ENCODE measurements at regions of chr2 and their contacts with region 1.

Region 1: DNA sequence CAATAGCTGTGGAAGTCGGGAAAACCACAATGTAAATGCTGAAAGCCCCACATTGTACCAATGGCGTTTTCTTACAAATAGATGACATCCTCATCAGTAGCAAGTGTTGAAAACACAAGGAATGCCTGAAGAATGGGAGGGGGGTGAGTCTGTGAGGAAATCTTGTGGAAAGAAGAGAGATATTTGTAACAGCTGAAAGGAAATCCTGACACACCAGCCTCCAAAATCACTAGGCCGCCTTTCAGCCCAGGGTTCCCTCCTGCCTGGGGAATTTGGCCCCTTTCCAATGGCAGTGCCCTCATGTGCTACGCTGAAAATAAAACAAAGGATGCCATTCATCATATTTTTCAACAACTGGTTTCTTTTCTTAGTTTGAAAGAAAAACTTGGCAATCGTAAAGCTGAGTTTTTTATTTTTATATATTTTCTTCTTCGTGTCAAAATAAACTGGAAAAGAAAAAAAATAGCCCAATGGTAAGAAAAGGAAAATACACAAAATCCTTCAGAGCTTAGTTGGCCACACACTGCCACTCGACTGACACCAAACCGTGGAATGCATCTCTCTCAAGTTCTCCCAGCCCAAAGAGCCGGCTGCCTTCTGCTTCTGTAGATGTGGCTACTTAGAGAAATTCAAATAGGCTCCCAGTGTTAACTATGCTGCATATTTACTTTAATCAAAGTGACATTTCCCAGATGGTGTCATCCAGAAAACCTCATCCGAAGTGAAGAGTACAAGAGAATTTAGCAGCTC is 52.0 kb downstream of the FTCDNL1 start:
- DNase-seq: peak; percentile 73
- H3K4me3 ChIP-seq: no peak overlapping the region
- H3K27ac ChIP-seq: peak overlapping the region in 3 of 4 donors; percentile 6 to 44 (median 44)
- H3K4me1 ChIP-seq: peaks cover 0 to 27% (median 21%) of the 10 kb centered on the region in 4 donors
- H3K27me3 ChIP-seq: no peaks in the 10 kb centered on the region
- CTCF ChIP-seq: no peak
- EP300 ChIP-seq: no peak
- POLR2A ChIP-seq: no peak

Region 2: GRCh38 chr2:199739413-199740110 is 59.4 kb before region 1 on chr2:
- intact Hi-C with region 1: no loop called
- DNase-seq: peak; percentile 81
- H3K4me3 ChIP-seq: no peak overlapping the region
- H3K27ac ChIP-seq: no peak overlapping the region
- H3K4me1 ChIP-seq: peaks cover 0 to 13% (median 11%) of the 10 kb centered on the region in 4 donors
- H3K27me3 ChIP-seq: no peaks in the 10 kb centered on the region
- CTCF ChIP-seq: peak; percentile 53 to 93 (median 84)
- EP300 ChIP-seq: no peak
- POLR2A ChIP-seq: no peak

Region 3: DNA sequence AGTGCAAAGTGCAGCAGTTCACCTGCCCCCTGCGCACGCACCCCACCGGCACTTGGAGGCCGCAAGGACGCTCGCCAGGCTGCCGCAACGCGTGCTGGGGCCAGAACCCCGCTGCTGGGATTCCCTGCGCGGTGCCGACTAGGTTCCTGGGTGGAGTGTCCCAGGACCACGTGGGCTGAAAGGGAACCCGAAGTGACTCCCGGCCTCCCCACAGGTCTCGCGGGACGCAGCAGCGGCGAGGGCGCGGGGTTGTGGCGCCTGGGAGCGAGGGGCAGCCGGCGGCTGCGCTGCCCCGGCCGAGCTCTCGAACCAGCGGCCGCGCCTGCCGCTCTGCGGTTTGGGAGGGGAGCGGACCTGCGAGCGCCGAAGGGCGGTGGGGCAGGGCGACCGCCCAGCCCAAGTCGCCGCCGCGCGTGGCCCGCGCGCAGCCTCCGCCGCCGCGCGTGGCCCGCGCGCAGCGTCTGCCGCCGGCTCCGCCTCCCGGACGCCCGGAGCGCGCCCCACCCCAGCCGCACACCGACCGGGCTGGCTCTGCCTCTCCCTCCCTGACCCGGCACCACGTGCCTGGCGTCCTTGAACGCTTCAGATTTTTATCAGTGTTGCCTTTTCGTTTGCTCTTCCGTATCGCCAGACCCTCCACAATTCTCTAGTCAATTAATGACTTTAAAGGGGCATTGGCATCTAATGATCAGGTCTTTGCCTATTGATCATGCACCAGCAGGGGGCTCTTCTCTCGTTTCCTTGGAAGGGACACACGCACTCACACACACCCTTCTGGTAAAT is 51.9 kb after region 1 on chr2 and contains the start of gene FTCDNL1:
- intact Hi-C with region 1: loop called (anchors 5 kb)
- DNase-seq: peak; percentile 79
- H3K4me3 ChIP-seq: peak within 1 kb of the TSS; percentile 53 to 77 (median 70)
- H3K27ac ChIP-seq: peak within 1 kb of the TSS; percentile 66 to 75 (median 73)
- H3K4me1 ChIP-seq: peaks cover 0 to 12% (median 5%) of the 10 kb centered on the region in 4 donors
- H3K27me3 ChIP-seq: no peaks in the 10 kb centered on the region
- CTCF ChIP-seq: peak in 3 of 4 experiments; percentile 22 to 41 (median 23)
- EP300 ChIP-seq: no peak
- POLR2A ChIP-seq: no peak
- total RNA-seq, gene FTCDNL1: 1.7 to 5.0 (median 3.2) TPM

Measured in sigmoid colon (tissue), 7 donors.